Prostate gland (tissue), 2 donors: ENCODE measurements at regions of chr4 and their contacts with region 1.

Region 1: GRCh38 chr4:147731580-147732517 is at the start of gene ARHGAP10:
- DNase-seq: peak; percentile 58
- H3K4me3 ChIP-seq: peak within 1 kb of the TSS; percentile 48 to 61
- H3K27ac ChIP-seq: peak within 1 kb of the TSS; percentile 79 to 85
- H3K4me1 ChIP-seq: peaks cover 2% of the 10 kb centered on the region
- H3K27me3 ChIP-seq: no peaks in the 10 kb centered on the region
- CTCF ChIP-seq: no peak
- POLR2A ChIP-seq: peak; percentile 12
- total RNA-seq, gene ARHGAP10: 30.3 to 69.6 TPM

Region 2: DNA sequence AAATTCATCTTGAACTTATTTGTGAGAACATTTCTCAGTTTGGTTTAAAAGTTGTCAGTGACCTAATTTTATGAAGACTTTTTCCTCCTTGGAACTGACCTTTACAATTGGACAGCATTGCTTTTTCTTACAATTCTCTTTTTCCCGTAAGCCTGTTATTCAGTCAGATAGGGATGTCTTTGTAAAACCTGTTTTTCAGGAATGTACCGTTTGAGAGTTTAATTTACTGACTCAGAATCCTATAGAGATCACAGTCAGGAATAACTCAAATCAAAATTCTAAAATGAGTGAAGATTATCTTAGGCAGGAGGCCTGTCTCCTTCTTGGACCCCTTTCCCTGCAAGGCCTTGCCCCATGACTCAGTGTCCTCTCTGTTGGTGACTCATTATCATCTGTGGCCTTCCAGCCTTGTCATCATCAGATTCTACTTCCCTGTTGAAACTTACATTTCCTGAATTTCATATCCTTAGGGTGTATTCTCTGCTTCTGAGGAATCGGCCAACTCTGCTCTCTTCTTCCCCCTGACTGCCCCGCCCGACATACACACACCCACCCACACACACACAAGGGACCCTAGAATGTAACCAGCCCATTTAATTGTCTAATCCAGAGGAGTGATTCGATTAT is 99.8 kb after region 1 on chr4:
- intact Hi-C with region 1: loop called (anchors 5 kb)
- DNase-seq: no peak
- H3K4me3 ChIP-seq: no peak overlapping the region
- H3K27ac ChIP-seq: peak overlapping the region; percentile 76 to 77
- H3K4me1 ChIP-seq: peaks cover 14% of the 10 kb centered on the region
- H3K27me3 ChIP-seq: no peaks in the 10 kb centered on the region
- CTCF ChIP-seq: no peak
- POLR2A ChIP-seq: no peak